ENCODE measurements at regions of chr2 and their contacts with region 1.

Region 1: GRCh38 chr2:74507145-74507925 is at the start of gene PCGF1:
- DNase-seq: peak; percentile 100
- H3K4me3 ChIP-seq: peak within 1 kb of the TSS; percentile 44 to 81 (median 67)
- H3K27ac ChIP-seq: peak within 1 kb of the TSS; percentile 90 to 98 (median 92)
- H3K4me1 ChIP-seq: peaks cover 12 to 44% (median 36%) of the 10 kb centered on the region in 4 donors
- H3K27me3 ChIP-seq: peaks cover 41% of the 10 kb centered on the region
- CTCF ChIP-seq: peak; percentile 12 to 50 (median 25)
- EP300 ChIP-seq: no peak
- POLR2A ChIP-seq: peak; percentile 75
- total RNA-seq, gene PCGF1: 3.7 to 23.9 (median 19.3) TPM

Region 2: GRCh38 chr2:74472086-74472944 is 35.0 kb before region 1 on chr2 and contains the start of gene MRPL53:
- in situ Hi-C with region 1: no loop called
- intact Hi-C with region 1: no loop called
- DNase-seq: peak; percentile 95
- H3K4me3 ChIP-seq: peak within 1 kb of the TSS; percentile 39 to 87 (median 60)
- H3K27ac ChIP-seq: peak within 1 kb of the TSS; percentile 89 to 99 (median 91)
- H3K4me1 ChIP-seq: peaks cover 12 to 23% (median 15%) of the 10 kb centered on the region in 4 donors
- H3K27me3 ChIP-seq: no peaks in the 10 kb centered on the region
- CTCF ChIP-seq: peak in 1 of 5 experiments; percentile 20
- EP300 ChIP-seq: no peak
- POLR2A ChIP-seq: peak; percentile 91
- total RNA-seq, gene MRPL53: 23.2 to 170 (median 26.3) TPM

Region 3: GRCh38 chr2:74524005-74524404 is 16.7 kb after region 1 on chr2:
- in situ Hi-C with region 1: no loop called
- intact Hi-C with region 1: no loop called
- DNase-seq: no peak
- H3K4me3 ChIP-seq: no peak overlapping the region
- H3K27ac ChIP-seq: no peak overlapping the region
- H3K4me1 ChIP-seq: peaks cover 9 to 12% (median 10%) of the 10 kb centered on the region in 4 donors
- H3K27me3 ChIP-seq: peaks cover 22% of the 10 kb centered on the region
- CTCF ChIP-seq: no peak
- EP300 ChIP-seq: no peak
- POLR2A ChIP-seq: no peak

Region 4: DNA sequence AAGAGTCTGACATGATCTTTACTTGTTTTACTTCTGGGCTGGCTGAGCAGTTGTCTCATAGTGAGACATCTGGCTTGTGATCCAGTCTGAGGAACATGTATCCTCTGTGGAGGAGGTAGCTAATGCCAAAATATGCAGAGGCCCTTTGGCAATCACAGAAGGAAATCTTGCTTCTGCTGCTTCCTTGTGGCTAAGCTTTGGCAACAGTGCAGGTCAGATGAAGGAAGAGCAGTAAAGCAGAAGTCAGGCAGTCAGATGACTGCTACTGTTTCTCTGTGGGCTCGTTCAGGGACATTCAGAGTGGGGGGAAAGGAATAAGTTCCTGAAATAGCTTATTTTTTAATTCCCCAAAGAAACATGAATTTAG is 69.5 kb after region 1 on chr2:
- in situ Hi-C with region 1: loop called in 1 of 4 experiments (anchors 5 kb)
- intact Hi-C with region 1: no loop called
- DNase-seq: no peak
- H3K4me3 ChIP-seq: no peak overlapping the region
- H3K27ac ChIP-seq: peak overlapping the region; percentile 15 to 53 (median 36)
- H3K4me1 ChIP-seq: peaks cover 0 to 5% (median 0%) of the 10 kb centered on the region in 4 donors
- H3K27me3 ChIP-seq: no peaks in the 10 kb centered on the region
- CTCF ChIP-seq: no peak
- EP300 ChIP-seq: no peak
- POLR2A ChIP-seq: no peak

Region 5: GRCh38 chr2:75157430-75157829 is 650.1 kb after region 1 on chr2:
- in situ Hi-C with region 1: no loop called
- intact Hi-C with region 1: no loop called
- DNase-seq: no peak
- H3K4me3 ChIP-seq: no peak overlapping the region
- H3K27ac ChIP-seq: no peak overlapping the region
- H3K4me1 ChIP-seq: peaks cover 0 to 6% (median 2%) of the 10 kb centered on the region in 4 donors
- H3K27me3 ChIP-seq: no peaks in the 10 kb centered on the region
- CTCF ChIP-seq: no peak
- EP300 ChIP-seq: no peak
- POLR2A ChIP-seq: no peak

Measured in transverse colon (tissue), 4 donors.